ENCODE measurements at regions of chr13 and their contacts with region 1.

Region 1: DNA sequence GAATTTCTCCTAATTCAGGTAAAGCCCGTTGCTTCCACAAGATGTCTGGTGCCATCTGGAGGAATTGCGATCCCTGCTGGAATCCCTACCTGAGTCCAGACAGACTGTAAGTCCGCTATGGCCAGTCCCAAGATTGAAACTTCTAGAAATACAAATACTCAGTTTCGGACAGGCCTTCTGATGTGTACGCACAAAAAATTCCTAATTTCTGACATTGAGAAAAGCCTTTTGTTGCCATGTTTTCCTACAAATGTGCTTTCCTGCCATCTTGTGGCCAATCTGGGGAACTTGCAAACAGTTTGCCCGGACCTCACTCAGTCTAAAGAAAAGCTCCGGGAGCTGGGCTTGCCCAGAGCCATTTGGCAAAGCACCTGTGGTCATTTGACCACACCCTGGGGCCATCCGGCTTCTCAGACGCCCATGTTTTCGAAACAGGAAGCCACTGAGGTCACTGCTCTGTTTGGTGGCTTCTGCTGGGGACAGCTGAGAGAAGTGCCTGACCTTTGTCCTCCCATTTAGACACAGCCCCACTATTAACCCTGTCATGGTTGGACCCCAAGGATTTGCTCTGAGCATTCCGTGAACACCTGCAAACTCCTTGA is 79.4 kb downstream of the SLC15A1 start:
- DNase-seq: peak; percentile 44
- H3K4me3 ChIP-seq: no peak overlapping the region
- H3K27ac ChIP-seq: no peak overlapping the region
- H3K4me1 ChIP-seq: peaks cover 11% of the 10 kb centered on the region
- H3K27me3 ChIP-seq: no peaks in the 10 kb centered on the region
- CTCF ChIP-seq: peak; percentile 91

Region 2: DNA sequence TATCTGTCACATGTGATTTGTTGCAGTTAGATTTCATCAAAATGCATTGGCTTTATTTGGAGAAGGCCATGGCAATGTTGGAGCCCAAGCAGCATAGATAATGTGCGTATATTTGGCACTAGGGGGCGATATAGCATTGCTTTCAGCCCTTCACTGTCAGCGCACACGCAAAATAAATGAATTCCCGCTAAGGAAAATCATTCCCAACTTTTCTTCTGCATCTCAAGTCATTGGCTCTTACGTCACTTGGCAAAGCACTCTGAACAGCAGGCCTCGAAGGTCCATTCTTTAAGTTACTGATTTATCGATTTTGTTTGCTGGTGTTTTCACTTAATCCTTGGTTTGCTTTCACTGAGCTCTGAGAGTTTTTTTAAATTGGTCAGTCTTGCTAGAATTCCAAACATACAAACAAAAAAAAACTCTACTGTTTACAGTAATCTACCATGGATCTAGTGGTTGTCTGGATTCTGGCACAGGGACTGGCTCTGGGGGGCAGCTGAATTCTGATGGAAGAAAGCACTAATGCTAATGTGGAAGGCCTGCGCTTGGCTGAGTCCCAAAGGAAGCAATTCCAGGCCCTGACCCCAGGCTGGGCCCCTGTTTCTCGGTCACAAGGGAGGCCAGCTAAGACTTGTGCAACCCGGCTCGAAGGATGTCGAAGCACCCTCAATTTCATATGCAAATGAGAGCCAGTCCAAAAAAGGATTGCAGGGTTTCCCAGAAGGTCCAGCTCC is 817.3 kb before region 1 on chr13:
- intact Hi-C with region 1: loop called (anchors 10 kb)
- DNase-seq: peak; percentile 34
- H3K4me3 ChIP-seq: no peak overlapping the region
- H3K27ac ChIP-seq: peak overlapping the region; percentile 40
- H3K4me1 ChIP-seq: peaks cover 4% of the 10 kb centered on the region
- H3K27me3 ChIP-seq: no peaks in the 10 kb centered on the region
- CTCF ChIP-seq: peak; percentile 90